CD14-positive monocyte (primary cell): ENCODE measurements at regions of chr20 and their contacts with region 1.

Region 1: DNA sequence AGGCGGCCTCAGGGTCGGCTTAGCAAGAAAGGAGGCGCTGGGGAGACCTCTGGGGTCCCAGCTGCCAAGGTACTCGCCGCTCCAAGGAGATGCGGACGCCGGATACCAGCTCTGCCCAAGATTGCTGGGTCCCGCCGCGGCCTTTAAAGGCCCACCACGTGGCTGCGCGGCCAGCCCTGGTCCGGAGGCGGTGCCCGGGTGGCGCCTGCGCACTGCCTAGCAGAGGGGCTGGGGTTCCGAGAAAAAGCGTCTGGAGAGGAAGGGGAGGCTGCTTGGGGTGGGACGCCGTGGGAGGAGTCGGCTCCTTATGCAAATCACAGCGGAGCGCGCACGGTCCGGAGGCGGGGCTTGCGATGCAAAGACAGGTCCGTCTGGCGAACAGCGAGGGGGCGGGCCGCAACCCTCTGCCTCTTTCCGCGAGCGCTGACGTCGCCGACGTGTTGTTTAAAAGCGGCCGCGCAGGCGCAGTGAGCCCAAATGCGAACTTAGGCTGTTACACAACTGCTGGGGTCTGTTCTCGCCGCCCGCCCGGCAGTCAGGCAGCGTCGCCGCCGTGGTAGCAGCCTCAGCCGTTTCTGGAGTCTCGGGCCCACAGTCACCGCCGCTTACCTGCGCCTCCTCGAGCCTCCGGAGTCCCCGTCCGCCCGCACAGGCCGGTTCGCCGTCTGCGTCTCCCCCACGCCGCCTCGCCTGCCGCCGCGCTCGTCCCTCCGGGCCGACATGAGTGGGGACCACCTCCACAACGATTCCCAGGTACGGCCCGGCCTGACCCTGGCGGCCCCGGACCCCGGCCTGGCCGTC is at the start of gene TOP1:
- DNase-seq: peak; percentile 100
- H3K4me3 ChIP-seq: peak within 1 kb of the TSS; percentile 76 to 88 (median 83)
- H3K4me3 Mint-ChIP-seq: peak within 1 kb of the TSS; percentile 88 to 90
- H3K27ac ChIP-seq: peak within 1 kb of the TSS; percentile 77 to 95
- H3K27ac Mint-ChIP-seq: peak within 1 kb of the TSS; percentile 92 to 98 (median 97)
- H3K4me1 ChIP-seq: peaks cover 34 to 47% of the 10 kb centered on the region in 2 donors
- H3K4me1 Mint-ChIP-seq: peaks cover 44% of the 10 kb centered on the region
- H3K27me3 ChIP-seq: no peaks in the 10 kb centered on the region
- H3K27me3 Mint-ChIP-seq: peaks cover 0 to 2% (median 0%) of the 10 kb centered on the region in 3 donors
- CTCF ChIP-seq: no peak
- polyA plus RNA-seq, gene TOP1: 6.9 to 11.5 (median 11.5) TPM

Region 2: DNA sequence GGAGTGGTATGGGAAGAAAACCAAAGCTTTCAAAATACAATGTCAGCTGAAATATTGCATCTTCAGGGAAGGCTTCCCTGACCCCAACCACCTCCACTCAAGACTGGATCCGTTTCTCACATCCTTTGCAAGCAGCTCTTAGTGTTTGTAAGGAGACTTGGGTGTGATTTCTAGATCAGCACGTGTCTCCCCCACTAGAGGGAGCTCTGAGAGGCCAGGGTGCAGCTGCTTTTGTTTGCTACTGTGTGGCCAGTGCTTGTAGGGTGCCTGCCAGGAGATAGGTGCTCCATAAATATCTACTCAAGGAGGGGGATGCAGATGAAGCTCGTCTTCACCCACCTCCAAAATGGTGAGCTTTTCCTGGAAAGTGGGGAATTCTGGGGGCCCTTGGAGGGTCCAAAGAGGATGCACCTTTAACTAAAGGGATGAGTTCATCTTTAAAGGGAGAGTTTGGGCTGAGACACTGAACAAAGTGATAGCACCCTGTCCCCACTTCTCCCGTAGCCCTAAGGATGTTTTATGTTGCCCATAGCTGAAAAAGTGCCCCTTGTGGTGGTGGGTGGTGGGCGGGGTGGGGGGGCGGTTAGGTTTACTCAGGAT is 286.9 kb before region 1 on chr20:
- intact Hi-C with region 1: no loop called
- DNase-seq: peak; percentile 48 to 63 (median 59)
- H3K4me3 ChIP-seq: no peak overlapping the region
- H3K4me3 Mint-ChIP-seq: no peak overlapping the region
- H3K27ac ChIP-seq: no peak overlapping the region
- H3K27ac Mint-ChIP-seq: no peak overlapping the region
- H3K4me1 ChIP-seq: peaks cover 38 to 46% of the 10 kb centered on the region in 2 donors
- H3K4me1 Mint-ChIP-seq: peaks cover 52% of the 10 kb centered on the region
- H3K27me3 ChIP-seq: no peaks in the 10 kb centered on the region
- H3K27me3 Mint-ChIP-seq: peaks cover 0 to 13% (median 0%) of the 10 kb centered on the region in 3 donors
- CTCF ChIP-seq: peak; percentile 82

Region 3: GRCh38 chr20:41064377-41064776 is 35.8 kb after region 1 on chr20:
- intact Hi-C with region 1: loop called in 1 of 2 experiments (anchors 5 kb)
- DNase-seq: no peak
- H3K4me3 ChIP-seq: no peak overlapping the region
- H3K4me3 Mint-ChIP-seq: no peak overlapping the region
- H3K27ac ChIP-seq: no peak overlapping the region
- H3K27ac Mint-ChIP-seq: peak overlapping the region in 1 of 7 donors; percentile 13
- H3K4me1 ChIP-seq: peaks cover 0 to 3% of the 10 kb centered on the region in 2 donors
- H3K4me1 Mint-ChIP-seq: peaks cover 27% of the 10 kb centered on the region
- H3K27me3 ChIP-seq: no peaks in the 10 kb centered on the region
- H3K27me3 Mint-ChIP-seq: no peaks in the 10 kb centered on the region
- CTCF ChIP-seq: no peak

Region 4: GRCh38 chr20:41095110-41095969 is 66.8 kb after region 1 on chr20:
- intact Hi-C with region 1: loop called in 1 of 2 experiments (anchors 10 kb)
- DNase-seq: peak; percentile 43 to 62 (median 56)
- H3K4me3 ChIP-seq: no peak overlapping the region
- H3K4me3 Mint-ChIP-seq: no peak overlapping the region
- H3K27ac ChIP-seq: no peak overlapping the region
- H3K27ac Mint-ChIP-seq: peak overlapping the region in 2 of 7 donors; percentile 32 to 35
- H3K4me1 ChIP-seq: no peaks in the 10 kb centered on the region
- H3K4me1 Mint-ChIP-seq: peaks cover 2% of the 10 kb centered on the region
- H3K27me3 ChIP-seq: no peaks in the 10 kb centered on the region
- H3K27me3 Mint-ChIP-seq: no peaks in the 10 kb centered on the region
- CTCF ChIP-seq: peak; percentile 90